PC-3 (cell line): ENCODE measurements at regions of chr3 and their contacts with region 1.

Region 1: GRCh38 chr3:186841628-186842027 is 882 bp upstream of the ADIPOQ start:
- DNase-seq: peak; percentile 43
- ATAC-seq: peak; percentile 60; the same call in 1 of the 2 replicates
- H3K4me3 ChIP-seq: no peak overlapping the region
- H3K27ac ChIP-seq: no peak overlapping the region
- H3K4me1 ChIP-seq: no peaks in the 10 kb centered on the region
- H3K27me3 ChIP-seq: peaks cover 5% of the 10 kb centered on the region; the same call in 1 of the 2 replicates
- CTCF ChIP-seq: no peak

Region 2: GRCh38 chr3:186896875-186897274 is 55.2 kb after region 1 on chr3:
- CTCF ChIA-PET with region 1: no interaction called
- POLR2A ChIA-PET with region 1: no interaction called
- intact Hi-C with region 1: no loop called
- DNase-seq: no peak
- ATAC-seq: no peak
- H3K4me3 ChIP-seq: no peak overlapping the region
- H3K27ac ChIP-seq: no peak overlapping the region
- H3K4me1 ChIP-seq: no peaks in the 10 kb centered on the region
- H3K27me3 ChIP-seq: no peaks in the 10 kb centered on the region
- CTCF ChIP-seq: no peak

Region 3: GRCh38 chr3:186930641-186931531 is 89.3 kb after region 1 on chr3:
- CTCF ChIA-PET with region 1: no interaction called
- POLR2A ChIA-PET with region 1: interaction called, 10 read pairs
- intact Hi-C with region 1: no loop called
- DNase-seq: peak; percentile 62
- ATAC-seq: peak; percentile 65
- H3K4me3 ChIP-seq: peak overlapping the region; percentile 77
- H3K27ac ChIP-seq: no peak overlapping the region
- H3K4me1 ChIP-seq: peaks cover 6% of the 10 kb centered on the region; the same call in 1 of the 2 replicates
- H3K27me3 ChIP-seq: no peaks in the 10 kb centered on the region
- CTCF ChIP-seq: no peak; the same call in 1 of the 2 replicates